ENCODE measurements at regions of chr1 and their contacts with region 1.

Region 1: DNA sequence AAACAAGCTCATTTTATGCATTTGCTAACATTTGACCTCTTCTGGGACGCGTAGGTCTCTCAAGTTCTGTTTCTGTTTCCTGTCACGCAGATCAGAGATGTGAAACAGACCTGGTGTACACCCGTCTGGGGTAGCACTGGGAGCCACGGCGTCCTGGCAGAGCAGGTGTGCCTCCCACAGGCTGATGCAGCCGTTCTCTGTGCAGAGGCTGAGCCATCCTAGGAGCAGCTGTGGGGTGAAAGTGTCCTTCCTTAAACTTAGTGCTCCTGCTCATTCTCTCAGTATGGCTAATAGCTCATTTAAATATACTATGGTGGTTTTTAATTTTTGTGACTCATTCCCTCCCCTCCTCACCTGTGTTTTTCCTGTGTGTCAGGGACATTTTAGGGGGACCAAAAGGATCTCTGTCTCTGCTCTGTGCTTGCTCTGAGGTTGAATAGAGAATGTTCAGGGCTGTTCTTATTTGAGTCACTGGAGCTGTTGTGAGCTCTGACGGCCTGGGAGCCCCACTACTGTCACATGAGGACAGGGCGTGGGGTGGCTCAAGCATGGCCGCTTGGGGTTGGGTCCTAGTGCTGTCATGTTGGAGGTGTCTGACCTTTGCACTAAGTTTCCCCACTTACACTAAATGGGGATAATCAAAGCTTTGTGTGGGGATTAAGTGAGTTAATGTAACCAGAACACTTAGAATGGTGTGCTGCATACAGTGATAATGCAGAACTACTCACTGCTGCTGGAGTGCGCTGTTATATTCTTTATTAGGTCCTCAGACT is 43.0 kb downstream of the GALNT2 start:
- DNase-seq: no peak
- ATAC-seq: 0 out of 2 replicates have a peak, but pooled peaks have one; percentile 12
- H3K4me3 Mint-ChIP-seq: no peak overlapping the region
- H3K27ac Mint-ChIP-seq: peak overlapping the region; percentile 66
- H3K4me1 Mint-ChIP-seq: peaks cover 74% of the 10 kb centered on the region
- H3K27me3 Mint-ChIP-seq: no peaks in the 10 kb centered on the region
- CTCF ChIP-seq: no peak

Region 2: DNA sequence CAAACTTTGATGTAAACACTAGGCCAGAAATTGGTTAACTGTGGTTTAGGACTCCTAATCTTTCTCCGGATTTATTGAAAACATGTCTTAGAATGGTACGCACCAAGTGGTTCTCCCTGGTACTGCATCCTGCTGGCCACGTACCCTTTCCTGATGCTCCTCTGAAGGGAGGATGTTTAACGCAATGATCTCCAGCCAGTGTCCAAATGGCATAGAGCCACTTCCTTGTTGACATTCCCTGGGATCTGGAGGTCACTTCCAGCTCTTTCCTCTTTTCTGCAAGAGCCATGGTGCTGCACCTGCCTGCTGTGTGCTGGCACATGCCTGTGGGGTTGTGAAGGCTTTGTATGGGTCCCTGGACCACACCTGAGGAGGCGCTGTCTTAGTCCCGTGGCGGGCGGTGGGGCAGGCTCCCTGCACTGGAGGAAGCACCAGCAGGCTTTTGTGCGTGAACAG is 10.9 kb after region 1 on chr1:
- CTCF ChIA-PET with region 1: interaction called, 30 read pairs
- POLR2A ChIA-PET with region 1: no interaction called
- DNase-seq: peak; percentile 58
- ATAC-seq: peak; percentile 80
- H3K4me3 Mint-ChIP-seq: no peak overlapping the region
- H3K27ac Mint-ChIP-seq: 0 out of 2 replicates have a peak overlapping the region, but pooled peaks have one; percentile 2
- H3K4me1 Mint-ChIP-seq: peaks cover 42% of the 10 kb centered on the region
- H3K27me3 Mint-ChIP-seq: no peaks in the 10 kb centered on the region
- CTCF ChIP-seq: peak; percentile 84

Region 3: GRCh38 chr1:230140221-230141020 is 30.3 kb after region 1 on chr1:
- CTCF ChIA-PET with region 1: no interaction called
- POLR2A ChIA-PET with region 1: no interaction called
- DNase-seq: no peak
- ATAC-seq: no peak
- H3K4me3 Mint-ChIP-seq: no peak overlapping the region
- H3K27ac Mint-ChIP-seq: peak overlapping the region; percentile 13; the same call in 1 of the 2 replicates
- H3K4me1 Mint-ChIP-seq: peaks cover 76% of the 10 kb centered on the region
- H3K27me3 Mint-ChIP-seq: no peaks in the 10 kb centered on the region
- CTCF ChIP-seq: no peak